ENCODE measurements at regions of chr7 and their contacts with region 1.

Region 1: DNA sequence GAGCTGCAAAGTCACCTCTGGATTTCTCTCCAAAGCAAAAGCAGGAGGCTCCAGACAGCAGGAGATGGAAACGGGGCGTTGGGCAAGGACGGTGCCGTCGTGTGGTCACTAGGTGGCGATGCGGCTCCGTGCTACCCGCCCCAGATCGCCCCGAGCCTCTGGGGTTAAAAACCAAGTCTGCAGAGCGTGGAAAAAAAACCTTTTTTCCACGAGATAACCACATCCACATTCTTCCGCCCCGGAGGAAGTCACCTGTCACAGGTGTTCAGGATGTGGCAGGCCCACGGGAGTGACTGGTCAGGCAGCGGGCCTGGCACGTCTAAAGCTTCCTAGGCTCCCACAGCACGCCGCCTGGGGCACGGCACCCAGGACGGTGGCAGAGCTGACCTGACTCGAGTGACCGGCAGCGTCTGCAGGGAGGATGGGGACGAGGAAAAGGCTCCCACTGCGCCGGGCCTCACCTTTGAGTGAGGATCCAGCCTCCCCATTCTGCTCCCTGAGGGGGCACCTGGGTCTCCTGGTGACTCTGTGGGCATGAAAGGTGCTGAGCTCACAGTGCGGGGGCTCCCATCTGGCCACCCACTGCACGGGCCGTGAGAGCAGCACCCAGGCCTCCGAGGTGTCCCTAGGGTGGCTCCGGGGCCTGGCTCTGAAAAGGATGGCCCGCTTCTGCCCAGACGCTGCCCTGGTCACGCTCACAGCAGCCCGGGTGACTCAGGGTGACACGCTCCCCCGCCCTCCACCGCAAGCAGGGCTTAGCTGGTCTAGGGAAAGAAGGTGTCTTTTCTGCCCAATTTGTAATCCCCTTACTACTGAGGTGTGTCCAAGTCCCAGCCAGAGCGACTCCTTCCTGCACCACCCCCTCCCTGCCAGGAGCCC is 71.3 kb upstream of the TNRC18 start:
- DNase-seq: peak; percentile 47 to 88 (median 71)
- ATAC-seq: peak; percentile 83 to 89 (median 88)
- H3K4me3 ChIP-seq: peak overlapping the region in 1 of 2 donors; percentile 8
- H3K4me3 Mint-ChIP-seq: peak overlapping the region; percentile 6 to 49 (median 9)
- H3K27ac ChIP-seq: no peak overlapping the region
- H3K27ac Mint-ChIP-seq: no peak overlapping the region
- H3K4me1 ChIP-seq: peaks cover 4 to 37% of the 10 kb centered on the region in 2 experiments
- H3K4me1 Mint-ChIP-seq: peaks cover 29 to 36% (median 33%) of the 10 kb centered on the region in 3 donors
- H3K27me3 ChIP-seq: no peaks in the 10 kb centered on the region
- H3K27me3 Mint-ChIP-seq: no peaks in the 10 kb centered on the region

Region 2: GRCh38 chr7:5423844-5424688 is 70.9 kb before region 1 on chr7:
- CTCF ChIA-PET with region 1: no interaction called
- POLR2A ChIA-PET with region 1: no interaction called
- DNase-seq: peak in 23 of 35 experiments; percentile 19 to 70 (median 38)
- ATAC-seq: peak; percentile 21 to 55 (median 33)
- H3K4me3 ChIP-seq: peak overlapping the region in 1 of 2 donors; percentile 68
- H3K4me3 Mint-ChIP-seq: peak overlapping the region; percentile 64 to 82 (median 78)
- H3K27ac ChIP-seq: no peak overlapping the region
- H3K27ac Mint-ChIP-seq: no peak overlapping the region
- H3K4me1 ChIP-seq: peaks cover 18 to 97% of the 10 kb centered on the region in 2 experiments
- H3K4me1 Mint-ChIP-seq: peaks cover 33 to 67% (median 48%) of the 10 kb centered on the region in 3 donors
- H3K27me3 ChIP-seq: peaks cover 0 to 95% of the 10 kb centered on the region in 2 experiments
- H3K27me3 Mint-ChIP-seq: peaks cover 38 to 66% of the 10 kb centered on the region in 2 donors

Region 3: GRCh38 chr7:5557920-5558401 is 63.0 kb after region 1 on chr7:
- CTCF ChIA-PET with region 1: interaction called, 3 to 23 read pairs
- POLR2A ChIA-PET with region 1: no interaction called
- DNase-seq: peak in 2 of 35 experiments; percentile 18 to 42
- ATAC-seq: no peak
- H3K4me3 ChIP-seq: peak overlapping the region; percentile 29 to 31
- H3K4me3 Mint-ChIP-seq: peak overlapping the region; percentile 77 to 89 (median 78)
- H3K27ac ChIP-seq: peak overlapping the region; percentile 86
- H3K27ac Mint-ChIP-seq: peak overlapping the region; percentile 91 to 94
- H3K4me1 ChIP-seq: peaks cover 31 to 71% of the 10 kb centered on the region in 2 experiments
- H3K4me1 Mint-ChIP-seq: peaks cover 43 to 52% (median 44%) of the 10 kb centered on the region in 3 donors
- H3K27me3 ChIP-seq: peaks cover 0 to 31% of the 10 kb centered on the region in 2 experiments
- H3K27me3 Mint-ChIP-seq: peaks cover 0 to 4% of the 10 kb centered on the region in 2 donors

Region 4: DNA sequence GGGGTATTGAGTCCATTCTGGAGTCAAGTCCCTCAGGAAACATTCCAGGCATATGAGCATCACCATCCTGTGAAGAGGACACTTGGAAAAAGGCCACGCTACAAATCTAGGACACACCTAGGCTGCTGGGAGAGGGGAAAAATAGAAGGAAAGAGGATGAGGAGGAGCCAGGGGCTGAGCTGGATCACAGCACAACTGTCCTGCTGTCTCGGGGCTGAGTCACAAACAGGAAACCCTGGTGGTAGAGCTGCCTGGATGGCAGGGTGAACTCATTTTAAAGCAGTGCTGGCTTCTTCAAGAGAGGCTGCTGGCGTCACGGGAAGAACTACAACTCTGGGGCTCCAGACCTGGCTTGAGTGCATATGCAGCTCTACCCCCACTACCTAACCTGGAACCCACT is 135.0 kb after region 1 on chr7:
- CTCF ChIA-PET with region 1: no interaction called
- POLR2A ChIA-PET with region 1: no interaction called
- DNase-seq: peak in 23 of 35 experiments; percentile 5 to 46 (median 27)
- ATAC-seq: peak; percentile 74 to 84 (median 82)
- H3K4me3 ChIP-seq: no peak overlapping the region
- H3K4me3 Mint-ChIP-seq: no peak overlapping the region
- H3K27ac ChIP-seq: no peak overlapping the region
- H3K27ac Mint-ChIP-seq: peak overlapping the region; percentile 85 to 88
- H3K4me1 ChIP-seq: peaks cover 4 to 38% of the 10 kb centered on the region in 2 experiments
- H3K4me1 Mint-ChIP-seq: peaks cover 37 to 44% (median 40%) of the 10 kb centered on the region in 3 donors
- H3K27me3 ChIP-seq: no peaks in the 10 kb centered on the region
- H3K27me3 Mint-ChIP-seq: no peaks in the 10 kb centered on the region

Region 5: GRCh38 chr7:5704534-5704922 is 209.6 kb after region 1 on chr7:
- CTCF ChIA-PET with region 1: interaction called, 11 to 13 read pairs
- POLR2A ChIA-PET with region 1: no interaction called
- DNase-seq: peak; percentile 46 to 89 (median 69)
- ATAC-seq: peak in 3 of 4 experiments; percentile 43 to 47 (median 45)
- H3K4me3 ChIP-seq: no peak overlapping the region
- H3K4me3 Mint-ChIP-seq: no peak overlapping the region
- H3K27ac ChIP-seq: no peak overlapping the region
- H3K27ac Mint-ChIP-seq: peak overlapping the region in 1 of 2 donors; percentile 0
- H3K4me1 ChIP-seq: peaks cover 24 to 27% of the 10 kb centered on the region in 2 experiments
- H3K4me1 Mint-ChIP-seq: peaks cover 39 to 41% (median 39%) of the 10 kb centered on the region in 3 donors
- H3K27me3 ChIP-seq: no peaks in the 10 kb centered on the region
- H3K27me3 Mint-ChIP-seq: no peaks in the 10 kb centered on the region